Activated CD4-positive, alpha-beta memory T cell treated with anti-CD3 and anti-CD28 coated beads for 36 hours (primary cell): ENCODE measurements at regions of chr19 and their contacts with region 1.

Region 1: GRCh38 chr19:19554074-19555023 is 16.3 kb downstream of the CILP2 start:
- DNase-seq: peak; percentile 77
- H3K4me3 Mint-ChIP-seq: no peak overlapping the region
- H3K27ac Mint-ChIP-seq: peak overlapping the region; percentile 8
- H3K4me1 Mint-ChIP-seq: peaks cover 3% of the 10 kb centered on the region
- H3K27me3 Mint-ChIP-seq: no peaks in the 10 kb centered on the region

Region 2: DNA sequence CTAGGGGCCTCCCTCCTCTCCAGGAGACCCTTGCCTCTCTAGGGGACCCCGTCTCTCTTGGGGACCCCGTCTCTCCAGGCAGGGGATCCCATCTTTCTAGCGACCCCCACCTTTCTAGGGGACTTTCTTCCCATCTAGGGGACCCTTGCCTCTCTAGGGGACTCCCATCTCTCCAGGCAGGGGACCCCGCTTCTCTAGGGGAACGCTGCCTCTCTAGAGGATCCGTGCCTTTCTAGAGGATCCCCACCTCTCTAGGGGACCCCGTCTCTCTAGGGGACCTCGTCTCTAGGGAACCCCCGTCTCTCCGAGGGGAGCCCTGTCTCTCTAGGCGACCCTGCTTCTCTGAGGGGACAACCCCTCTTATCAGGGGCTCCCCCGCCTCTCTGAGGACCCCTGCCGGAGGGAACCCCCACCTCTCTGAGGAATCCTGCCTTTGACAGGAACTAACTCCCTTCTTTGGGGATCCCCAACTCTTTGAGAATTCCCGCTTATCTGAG is 167.9 kb before region 1 on chr19:
- CTCF ChIA-PET with region 1: no interaction called
- POLR2A ChIA-PET with region 1: no interaction called
- intact Hi-C with region 1: no loop called
- DNase-seq: peak; percentile 30
- H3K4me3 Mint-ChIP-seq: peak overlapping the region; percentile 83
- H3K27ac Mint-ChIP-seq: peak overlapping the region; percentile 77
- H3K4me1 Mint-ChIP-seq: peaks cover 45% of the 10 kb centered on the region
- H3K27me3 Mint-ChIP-seq: no peaks in the 10 kb centered on the region

Region 3: DNA sequence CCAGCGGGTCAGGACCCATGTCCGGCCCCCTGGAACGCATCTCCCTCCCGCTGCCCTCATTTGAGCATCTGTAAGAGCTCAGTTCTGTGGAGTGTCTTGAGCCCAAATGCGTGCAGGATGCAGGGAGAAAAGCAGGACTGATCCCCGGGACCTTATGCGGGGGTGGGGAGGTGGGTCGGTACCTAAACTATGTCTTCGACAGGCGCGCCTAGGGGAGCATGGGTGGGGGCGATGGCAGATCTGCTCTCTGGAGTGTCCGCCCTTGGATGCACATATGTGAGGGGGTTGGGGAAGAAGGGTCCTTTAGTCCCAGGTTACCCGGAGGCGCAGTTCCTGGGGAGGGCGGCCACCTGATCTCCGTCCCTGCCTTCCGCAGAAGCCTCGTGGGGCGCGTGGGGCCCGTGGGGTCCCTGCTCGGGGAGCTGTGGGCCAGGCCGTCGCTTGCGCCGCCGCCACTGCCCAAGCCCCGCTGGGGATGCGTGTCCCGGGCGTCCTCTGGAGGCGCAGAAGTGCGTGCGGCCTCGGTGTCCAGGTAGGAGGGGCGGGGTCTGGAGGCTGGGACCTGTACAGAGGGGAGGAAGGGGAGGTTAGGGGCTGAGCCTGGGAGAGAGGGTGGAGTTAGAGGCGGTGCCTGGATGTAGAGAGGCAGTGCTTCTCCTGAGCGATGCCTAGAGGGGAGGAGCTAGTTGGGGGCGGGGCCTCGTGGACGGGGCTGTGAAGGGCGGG is 13.5 kb before region 1 on chr19:
- CTCF ChIA-PET with region 1: interaction called, 35 read pairs
- POLR2A ChIA-PET with region 1: no interaction called
- intact Hi-C with region 1: no loop called
- DNase-seq: peak; percentile 91
- H3K4me3 Mint-ChIP-seq: peak overlapping the region; percentile 70
- H3K27ac Mint-ChIP-seq: no peak overlapping the region
- H3K4me1 Mint-ChIP-seq: peaks cover 26% of the 10 kb centered on the region
- H3K27me3 Mint-ChIP-seq: peaks cover 5% of the 10 kb centered on the region

Region 4: GRCh38 chr19:19578252-19578651 is 23.9 kb after region 1 on chr19:
- CTCF ChIA-PET with region 1: interaction called, 34 read pairs
- POLR2A ChIA-PET with region 1: no interaction called
- intact Hi-C with region 1: no loop called
- DNase-seq: no peak
- H3K4me3 Mint-ChIP-seq: no peak overlapping the region
- H3K27ac Mint-ChIP-seq: no peak overlapping the region
- H3K4me1 Mint-ChIP-seq: peaks cover 8% of the 10 kb centered on the region
- H3K27me3 Mint-ChIP-seq: no peaks in the 10 kb centered on the region

Region 5: DNA sequence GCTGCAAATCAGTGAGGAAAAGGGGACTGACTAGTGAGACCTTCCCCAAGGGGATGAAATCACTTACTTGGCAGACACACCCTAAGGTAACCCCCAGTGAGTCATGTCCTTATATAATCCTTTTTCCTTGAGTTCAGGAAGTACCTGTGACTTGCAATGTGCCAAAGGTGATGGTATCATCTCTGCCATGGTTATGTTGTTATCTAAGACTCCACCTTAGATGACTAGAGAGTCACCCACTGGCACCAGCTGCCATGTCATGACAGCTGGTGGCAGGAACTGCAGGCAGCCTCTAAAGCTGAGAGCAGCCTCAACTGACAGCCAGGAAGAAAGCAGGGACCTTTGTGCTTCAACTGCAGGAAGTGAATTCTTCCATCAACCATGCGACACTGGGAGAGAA is 51.7 kb after region 1 on chr19:
- CTCF ChIA-PET with region 1: interaction called, 28 read pairs
- POLR2A ChIA-PET with region 1: no interaction called
- intact Hi-C with region 1: no loop called
- DNase-seq: peak; percentile 71
- H3K4me3 Mint-ChIP-seq: peak overlapping the region; percentile 10
- H3K27ac Mint-ChIP-seq: peak overlapping the region; percentile 88
- H3K4me1 Mint-ChIP-seq: peaks cover 58% of the 10 kb centered on the region
- H3K27me3 Mint-ChIP-seq: no peaks in the 10 kb centered on the region

Region 6: GRCh38 chr19:19643158-19644053 is 89.1 kb after region 1 on chr19 and contains the start of gene GMIP:
- CTCF ChIA-PET with region 1: interaction called, 33 read pairs
- POLR2A ChIA-PET with region 1: no interaction called
- intact Hi-C with region 1: no loop called
- DNase-seq: peak; percentile 89
- H3K4me3 Mint-ChIP-seq: peak within 1 kb of the TSS; percentile 99
- H3K27ac Mint-ChIP-seq: peak within 1 kb of the TSS; percentile 98
- H3K4me1 Mint-ChIP-seq: peaks cover 12% of the 10 kb centered on the region
- H3K27me3 Mint-ChIP-seq: no peaks in the 10 kb centered on the region
- total RNA-seq, gene GMIP: 78.6 to 79.4 TPM